ENCODE measurements at regions of chr20 and their contacts with region 1.

Region 1: GRCh38 chr20:5596401-5597193 is 153.6 kb upstream of the SHLD1 start:
- DNase-seq: no peak
- ATAC-seq: no peak
- H3K4me3 ChIP-seq: no peak overlapping the region
- H3K4me3 Mint-ChIP-seq: no peak overlapping the region
- H3K27ac ChIP-seq: peak overlapping the region in 1 of 2 donors; percentile 12
- H3K27ac Mint-ChIP-seq: peak overlapping the region; percentile 62
- H3K4me1 ChIP-seq: peaks cover 16 to 18% of the 10 kb centered on the region in 2 donors
- H3K4me1 Mint-ChIP-seq: peaks cover 58% of the 10 kb centered on the region
- H3K27me3 ChIP-seq: no peaks in the 10 kb centered on the region
- H3K27me3 Mint-ChIP-seq: no peaks in the 10 kb centered on the region
- CTCF ChIP-seq: no peak

Region 2: DNA sequence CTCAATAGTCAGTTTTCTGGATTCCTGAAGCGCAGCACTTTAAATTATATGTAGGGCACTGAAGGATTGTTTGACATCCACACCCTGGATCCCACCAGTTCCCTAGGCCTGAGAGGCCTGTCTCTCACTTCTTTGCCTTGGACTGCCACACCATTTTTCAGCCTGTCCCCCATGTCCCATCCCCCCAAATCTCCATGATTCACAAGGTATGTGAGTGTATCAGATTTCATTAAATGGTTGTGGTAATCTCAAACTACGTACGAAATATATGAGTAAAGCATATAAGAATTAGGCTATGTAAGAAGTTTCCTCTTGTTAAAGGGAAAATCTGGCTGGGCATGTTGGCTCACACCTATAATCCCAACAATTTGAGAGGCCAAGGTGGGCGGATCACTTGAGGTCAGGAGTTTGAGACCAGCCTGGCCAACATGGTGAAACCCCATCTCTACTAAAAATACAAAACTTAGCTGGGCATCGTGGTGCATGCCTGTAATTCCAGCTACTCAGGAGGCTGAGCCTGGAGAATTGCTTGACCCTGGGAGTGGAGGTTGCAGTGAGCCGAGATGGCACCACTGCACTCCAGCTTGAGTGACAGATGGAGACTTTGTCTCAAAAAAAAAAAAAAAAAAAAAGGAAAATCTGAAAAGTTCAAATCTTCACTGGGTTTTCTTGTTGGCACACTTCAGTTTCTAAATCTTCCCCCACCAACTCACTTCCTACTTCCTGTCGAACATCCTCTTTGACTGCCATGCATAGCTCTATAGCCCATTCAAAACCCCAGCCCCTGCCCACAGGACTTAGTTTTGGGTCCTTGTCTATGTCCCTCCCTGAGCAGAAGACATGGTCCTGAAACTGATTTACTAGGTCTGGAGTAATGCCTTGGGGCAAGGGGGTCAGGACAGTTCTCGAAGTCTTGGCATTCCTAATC is 56.3 kb after region 1 on chr20:
- CTCF ChIA-PET with region 1: no interaction called
- POLR2A ChIA-PET with region 1: interaction called, 10 read pairs
- intact Hi-C with region 1: no loop called
- DNase-seq: peak; percentile 58
- ATAC-seq: no peak
- H3K4me3 ChIP-seq: peak overlapping the region in 1 of 5 experiments; percentile 44
- H3K4me3 Mint-ChIP-seq: peak overlapping the region; percentile 78
- H3K27ac ChIP-seq: peak overlapping the region; percentile 83 to 95
- H3K27ac Mint-ChIP-seq: peak overlapping the region; percentile 98
- H3K4me1 ChIP-seq: peaks cover 75 to 96% of the 10 kb centered on the region in 2 donors
- H3K4me1 Mint-ChIP-seq: peaks cover 70% of the 10 kb centered on the region
- H3K27me3 ChIP-seq: no peaks in the 10 kb centered on the region
- H3K27me3 Mint-ChIP-seq: no peaks in the 10 kb centered on the region
- CTCF ChIP-seq: no peak

Region 3: DNA sequence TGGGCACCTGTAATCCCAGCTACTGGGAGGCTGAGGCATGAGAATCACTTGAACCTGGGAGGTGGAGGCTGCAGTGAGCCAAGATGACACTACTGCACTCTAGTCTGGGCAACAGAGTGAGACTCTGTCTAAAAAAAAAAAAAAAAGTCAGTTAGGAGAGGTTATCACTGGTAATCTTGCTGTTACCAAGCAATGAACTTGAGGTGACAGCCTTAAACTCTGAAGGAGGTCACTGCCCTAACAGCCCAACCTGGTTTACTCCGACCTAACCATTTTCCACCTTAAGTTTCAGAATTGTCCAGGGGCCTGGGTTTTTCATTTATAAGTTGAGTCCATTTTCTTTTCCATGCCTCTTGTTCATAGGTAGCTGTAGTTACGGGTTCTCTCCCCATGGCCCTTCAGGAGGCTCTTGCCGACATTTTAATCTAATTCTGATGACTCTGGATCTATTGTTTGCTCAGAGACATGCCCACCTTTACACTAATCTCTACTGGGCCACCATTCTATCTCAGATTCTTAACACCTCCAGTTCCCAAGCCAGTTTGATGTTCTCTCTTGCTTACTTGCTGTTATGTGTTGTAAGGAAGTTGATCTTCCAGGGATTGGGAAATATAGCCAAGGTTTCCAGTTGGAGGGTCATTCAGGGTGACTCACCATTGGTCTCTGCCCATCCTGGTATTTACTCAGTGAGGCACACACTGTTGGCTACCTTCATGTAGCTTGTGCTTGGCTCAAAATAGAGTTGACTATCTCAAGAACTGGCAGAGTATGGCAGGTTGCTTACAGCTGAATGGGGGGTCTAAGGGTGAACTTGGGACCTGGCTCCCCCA is 182.7 kb after region 1 on chr20:
- CTCF ChIA-PET with region 1: no interaction called
- POLR2A ChIA-PET with region 1: no interaction called
- intact Hi-C with region 1: no loop called
- DNase-seq: no peak
- ATAC-seq: no peak
- H3K4me3 ChIP-seq: no peak overlapping the region
- H3K4me3 Mint-ChIP-seq: no peak overlapping the region
- H3K27ac ChIP-seq: no peak overlapping the region
- H3K27ac Mint-ChIP-seq: no peak overlapping the region
- H3K4me1 ChIP-seq: peaks cover 12 to 14% of the 10 kb centered on the region in 2 donors
- H3K4me1 Mint-ChIP-seq: peaks cover 8% of the 10 kb centered on the region
- H3K27me3 ChIP-seq: no peaks in the 10 kb centered on the region
- H3K27me3 Mint-ChIP-seq: no peaks in the 10 kb centered on the region
- CTCF ChIP-seq: no peak

Region 4: DNA sequence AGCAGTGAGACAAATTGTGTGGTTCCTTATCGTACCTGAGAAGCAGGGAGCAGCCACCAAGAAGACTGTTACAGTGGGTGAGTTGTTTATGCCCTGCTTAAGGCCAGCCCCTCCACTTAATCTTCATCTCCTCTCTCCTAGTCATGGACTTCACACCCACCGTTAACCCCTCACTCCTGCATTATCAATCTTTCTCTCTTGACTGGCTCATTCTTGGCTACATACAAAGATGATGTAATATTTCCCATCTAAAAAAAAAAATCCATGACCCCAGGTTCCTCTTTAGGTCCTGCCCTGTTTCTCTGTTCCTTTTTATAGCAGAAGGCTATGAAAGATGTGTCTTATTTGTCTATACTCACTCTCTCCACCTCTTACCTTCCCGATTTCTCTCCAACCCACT is 226.0 kb after region 1 on chr20:
- CTCF ChIA-PET with region 1: no interaction called
- POLR2A ChIA-PET with region 1: no interaction called
- intact Hi-C with region 1: no loop called
- DNase-seq: peak; percentile 19
- ATAC-seq: peak; percentile 57
- H3K4me3 ChIP-seq: no peak overlapping the region
- H3K4me3 Mint-ChIP-seq: no peak overlapping the region
- H3K27ac ChIP-seq: no peak overlapping the region
- H3K27ac Mint-ChIP-seq: peak overlapping the region; percentile 59
- H3K4me1 ChIP-seq: peaks cover 8 to 15% of the 10 kb centered on the region in 2 donors
- H3K4me1 Mint-ChIP-seq: peaks cover 26% of the 10 kb centered on the region
- H3K27me3 ChIP-seq: no peaks in the 10 kb centered on the region
- H3K27me3 Mint-ChIP-seq: no peaks in the 10 kb centered on the region
- CTCF ChIP-seq: no peak

Measured in B cell (primary cell).